A673 (cell line): ENCODE measurements at regions of chr20 and their contacts with region 1.

Region 1: DNA sequence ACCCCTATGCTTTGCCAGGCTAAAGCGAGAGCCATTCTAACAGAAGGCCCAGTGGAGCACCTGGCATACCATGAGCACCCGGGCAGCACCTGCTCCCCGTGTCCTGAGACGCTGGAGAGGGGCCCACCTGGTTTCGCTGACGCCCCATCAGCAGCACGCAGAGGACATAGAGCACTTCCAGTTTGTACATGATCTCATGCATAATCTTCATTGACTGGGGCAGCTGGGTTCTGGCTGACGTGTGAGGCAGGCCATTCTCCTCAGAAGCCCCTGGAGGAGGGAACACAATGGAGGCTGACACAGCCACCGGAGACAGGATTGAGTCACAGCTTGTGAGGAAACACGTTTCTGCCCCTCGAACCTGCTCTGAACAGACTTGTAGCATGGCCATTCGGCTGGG is 65.4 kb downstream of the MYH7B start:
- DNase-seq: no peak
- H3K4me3 ChIP-seq: no peak overlapping the region
- H3K27ac ChIP-seq: no peak overlapping the region
- H3K4me1 ChIP-seq: no peaks in the 10 kb centered on the region
- H3K27me3 ChIP-seq: no peaks in the 10 kb centered on the region
- CTCF ChIP-seq: no peak

Region 2: DNA sequence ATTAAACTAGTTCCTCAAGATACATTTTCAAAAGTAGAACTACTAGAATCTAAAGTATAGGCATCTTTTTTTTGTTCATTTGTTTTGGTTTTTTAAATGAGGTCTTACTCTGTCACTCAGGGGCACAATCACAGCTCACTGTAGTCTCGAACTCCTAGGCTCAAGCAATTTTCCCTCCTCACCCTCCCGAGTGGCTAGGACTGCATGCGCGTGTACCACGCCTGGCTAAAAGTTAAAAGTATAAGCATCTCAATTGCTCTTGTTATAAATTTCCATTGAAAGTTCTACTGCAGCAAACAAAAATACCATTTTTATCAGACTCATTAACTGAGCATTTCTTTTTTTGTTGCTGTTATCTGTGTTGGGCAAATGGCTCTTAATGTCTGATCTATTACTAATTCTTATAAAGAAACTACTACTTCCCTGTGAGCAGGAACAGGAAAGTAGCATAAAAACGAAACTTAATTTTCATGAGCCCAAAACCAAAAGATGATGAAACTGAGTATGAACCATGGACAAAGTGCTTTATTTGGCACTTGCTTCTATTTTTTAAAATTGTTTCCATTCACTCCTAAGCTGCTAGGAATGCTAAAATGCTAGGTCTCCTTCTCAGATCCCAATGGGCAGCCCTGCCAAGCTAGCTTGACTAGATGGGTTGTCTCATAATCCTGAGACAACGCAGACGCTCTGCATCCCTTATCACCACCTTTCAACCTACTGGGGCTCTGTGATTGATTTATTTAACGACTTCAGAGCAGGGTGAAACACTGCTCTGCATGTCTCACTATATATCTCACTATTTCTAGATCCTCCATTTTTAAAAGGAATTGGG is 34.6 kb after region 1 on chr20:
- CTCF ChIA-PET with region 1: no interaction called
- POLR2A ChIA-PET with region 1: no interaction called
- intact Hi-C with region 1: no loop called
- DNase-seq: no peak
- H3K4me3 ChIP-seq: no peak overlapping the region
- H3K27ac ChIP-seq: no peak overlapping the region
- H3K4me1 ChIP-seq: peaks cover 4% of the 10 kb centered on the region
- H3K27me3 ChIP-seq: no peaks in the 10 kb centered on the region
- CTCF ChIP-seq: no peak

Region 3: DNA sequence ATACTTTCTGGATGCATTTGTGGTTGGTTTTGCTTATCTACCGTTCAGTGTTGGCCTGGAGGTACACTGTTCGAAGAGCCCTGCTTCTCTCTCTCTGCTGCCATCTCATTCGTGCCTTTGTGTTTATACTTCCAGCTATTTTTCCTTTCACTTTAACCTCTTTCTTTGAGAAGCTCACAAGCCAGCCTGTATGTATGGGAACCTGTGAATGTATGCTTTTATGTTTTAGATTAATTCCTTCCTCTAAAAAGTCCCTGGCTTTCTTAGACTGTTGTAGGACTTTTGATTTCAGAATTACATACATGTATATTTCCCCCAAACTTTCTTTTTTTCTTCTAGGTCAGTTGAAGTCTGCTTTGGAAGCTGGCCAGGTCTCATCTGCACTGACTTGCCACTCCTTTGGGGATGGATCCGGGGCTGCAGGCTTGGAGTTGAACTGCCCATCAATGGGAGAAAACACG is 850.3 kb after region 1 on chr20:
- CTCF ChIA-PET with region 1: no interaction called
- POLR2A ChIA-PET with region 1: interaction called, 10 read pairs
- intact Hi-C with region 1: no loop called
- DNase-seq: peak; percentile 54
- H3K4me3 ChIP-seq: peak overlapping the region; percentile 12
- H3K27ac ChIP-seq: peak overlapping the region; percentile 76
- H3K4me1 ChIP-seq: peaks cover 18% of the 10 kb centered on the region
- H3K27me3 ChIP-seq: no peaks in the 10 kb centered on the region
- CTCF ChIP-seq: no peak